ENCODE measurements at regions of chr7 and their contacts with region 1.

Region 1: GRCh38 chr7:131107337-131108211 is 220.1 kb upstream of the MKLN1 start:
- DNase-seq: peak; percentile 76 to 85 (median 80)
- ATAC-seq: peak; percentile 36 to 56 (median 48)
- H3K4me3 ChIP-seq: peak overlapping the region; percentile 62 to 98 (median 86)
- H3K27ac ChIP-seq: peak overlapping the region; percentile 94 to 100 (median 99)
- H3K4me1 ChIP-seq: peaks cover 5 to 67% (median 50%) of the 10 kb centered on the region in 12 donors
- H3K27me3 ChIP-seq: no peaks in the 10 kb centered on the region
- CTCF ChIP-seq: peak in 2 of 12 donors; percentile 14 to 26
- POLR2A ChIP-seq: peak in 1 of 2 donors; percentile 87

Region 2: DNA sequence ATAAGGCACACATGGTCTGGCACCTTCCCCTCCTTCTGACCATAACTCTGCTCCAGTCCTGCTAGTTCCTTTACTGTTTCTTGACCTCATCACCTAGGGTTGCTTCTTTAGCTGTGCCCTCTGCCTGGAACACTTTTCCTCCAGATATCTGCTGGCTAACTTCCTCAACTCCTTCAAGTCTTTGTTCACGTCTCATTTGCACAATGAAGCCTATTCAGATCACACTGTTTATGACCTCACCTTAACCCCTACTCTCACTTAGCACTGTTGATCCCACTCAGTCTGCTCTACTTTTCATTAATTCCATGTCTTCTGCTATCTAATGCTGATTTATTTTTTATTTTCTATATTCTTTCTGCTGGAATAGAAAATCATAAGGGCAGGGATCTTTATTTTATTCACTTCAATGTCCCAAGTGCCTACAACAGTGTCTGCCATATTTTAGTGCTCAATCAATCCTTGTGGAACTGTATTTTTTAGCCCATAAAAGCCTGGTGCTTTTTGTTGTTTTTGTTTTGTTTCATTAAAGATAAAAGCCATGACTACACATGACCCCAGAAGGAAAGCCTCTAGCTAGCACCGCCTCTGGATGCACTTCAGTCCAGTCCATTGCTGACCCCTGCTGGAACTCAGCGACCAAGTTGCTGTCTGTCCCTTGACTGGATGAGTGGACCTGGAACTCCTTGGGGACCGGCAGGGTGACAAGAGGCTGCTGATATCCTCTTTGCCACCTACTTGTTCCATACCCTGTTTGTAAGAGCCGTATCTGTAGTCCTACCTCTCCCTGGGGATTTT is 385.9 kb before region 1 on chr7:
- intact Hi-C with region 1: no loop called
- DNase-seq: peak; percentile 69 to 84 (median 79)
- ATAC-seq: peak; percentile 87 to 98 (median 95)
- H3K4me3 ChIP-seq: no peak overlapping the region
- H3K27ac ChIP-seq: no peak overlapping the region
- H3K4me1 ChIP-seq: peaks cover 0 to 7% (median 0%) of the 10 kb centered on the region in 12 donors
- H3K27me3 ChIP-seq: peaks cover 0 to 15% (median 0%) of the 10 kb centered on the region in 9 donors
- CTCF ChIP-seq: peak; percentile 48 to 85 (median 76)
- POLR2A ChIP-seq: no peak

Region 3: GRCh38 chr7:130896898-130897514 is 210.6 kb before region 1 on chr7:
- intact Hi-C with region 1: loop called in 1 of 10 experiments (anchors 10 kb)
- DNase-seq: peak; percentile 72 to 85 (median 79)
- ATAC-seq: peak; percentile 41 to 66 (median 58)
- H3K4me3 ChIP-seq: no peak overlapping the region
- H3K27ac ChIP-seq: peak overlapping the region in 8 of 12 donors; percentile 30 to 81 (median 43)
- H3K4me1 ChIP-seq: peaks cover 7 to 88% (median 54%) of the 10 kb centered on the region in 12 donors
- H3K27me3 ChIP-seq: no peaks in the 10 kb centered on the region
- CTCF ChIP-seq: peak; percentile 70 to 90 (median 85)
- POLR2A ChIP-seq: no peak

Region 4: GRCh38 chr7:131151034-131151433 is 43.5 kb after region 1 on chr7:
- intact Hi-C with region 1: loop called in 1 of 10 experiments (anchors 5 kb)
- DNase-seq: no peak
- ATAC-seq: no peak
- H3K4me3 ChIP-seq: no peak overlapping the region
- H3K27ac ChIP-seq: no peak overlapping the region
- H3K4me1 ChIP-seq: peaks cover 0 to 13% (median 0%) of the 10 kb centered on the region in 12 donors
- H3K27me3 ChIP-seq: no peaks in the 10 kb centered on the region
- CTCF ChIP-seq: no peak
- POLR2A ChIP-seq: no peak

Region 5: GRCh38 chr7:131219312-131220041 is 111.9 kb after region 1 on chr7:
- intact Hi-C with region 1: loop called in 4 of 10 experiments (anchors 5 to 10 kb)
- DNase-seq: peak; percentile 59 to 78 (median 65)
- ATAC-seq: peak; percentile 78 to 97 (median 93)
- H3K4me3 ChIP-seq: no peak overlapping the region
- H3K27ac ChIP-seq: peak overlapping the region; percentile 25 to 82 (median 65)
- H3K4me1 ChIP-seq: peaks cover 0 to 20% (median 17%) of the 10 kb centered on the region in 12 donors
- H3K27me3 ChIP-seq: no peaks in the 10 kb centered on the region
- CTCF ChIP-seq: no peak
- POLR2A ChIP-seq: no peak

Region 6: DNA sequence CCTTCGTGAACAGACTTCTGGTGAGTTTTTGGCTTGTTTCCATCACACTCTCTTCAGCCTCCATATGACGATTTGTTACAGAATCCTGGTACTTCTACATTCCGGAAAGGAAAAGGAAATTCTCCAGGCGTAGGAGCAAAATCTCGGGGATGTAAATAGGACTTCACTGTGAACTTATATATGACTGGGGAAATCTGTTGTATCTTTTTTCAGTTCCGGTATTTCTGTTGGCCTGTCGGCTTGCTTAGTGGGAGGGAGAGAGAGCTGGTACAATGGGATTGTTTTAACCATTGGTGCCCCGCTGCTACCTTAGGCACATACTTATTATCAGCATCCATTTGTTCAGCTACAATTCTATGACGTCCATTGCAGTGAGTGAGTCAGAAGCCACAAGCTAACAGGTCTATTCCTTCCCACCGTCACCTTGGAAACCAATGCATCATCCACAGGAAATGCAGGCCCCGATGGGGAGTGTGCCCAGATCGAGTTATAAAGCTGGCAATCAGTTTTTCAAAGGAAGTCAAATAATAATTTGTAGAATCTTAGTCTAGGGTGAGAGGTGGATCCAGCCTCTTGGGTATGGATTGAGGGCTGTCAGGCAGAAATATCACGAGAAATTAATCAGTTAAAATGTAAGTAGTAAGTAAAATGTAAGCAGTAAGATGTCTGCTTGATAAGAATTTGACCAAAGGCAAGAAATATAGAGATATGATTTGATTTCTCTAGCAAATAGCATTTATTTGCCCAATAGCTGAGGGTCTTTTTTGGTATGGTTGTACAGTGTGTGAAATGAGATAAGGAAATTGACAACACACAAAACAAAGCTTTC is 128.1 kb after region 1 on chr7:
- intact Hi-C with region 1: loop called in 1 of 10 experiments (anchors 5 kb)
- DNase-seq: peak in 2 of 5 donors; percentile 43 to 60
- ATAC-seq: peak; percentile 25 to 76 (median 69)
- H3K4me3 ChIP-seq: no peak overlapping the region
- H3K27ac ChIP-seq: peak overlapping the region in 6 of 12 donors; percentile 15 to 65 (median 34)
- H3K4me1 ChIP-seq: peaks cover 0 to 47% (median 17%) of the 10 kb centered on the region in 12 donors
- H3K27me3 ChIP-seq: no peaks in the 10 kb centered on the region
- CTCF ChIP-seq: no peak
- POLR2A ChIP-seq: no peak

Region 7: GRCh38 chr7:131302876-131303707 is 195.5 kb after region 1 on chr7:
- intact Hi-C with region 1: loop called in 7 of 10 experiments (anchors 2 to 10 kb)
- DNase-seq: no peak
- ATAC-seq: peak in 3 of 4 donors; percentile 39 to 58 (median 46)
- H3K4me3 ChIP-seq: no peak overlapping the region
- H3K27ac ChIP-seq: peak overlapping the region in 8 of 12 donors; percentile 4 to 72 (median 55)
- H3K4me1 ChIP-seq: peaks cover 0 to 41% (median 22%) of the 10 kb centered on the region in 12 donors
- H3K27me3 ChIP-seq: no peaks in the 10 kb centered on the region
- CTCF ChIP-seq: peak; percentile 34 to 70 (median 56)
- POLR2A ChIP-seq: no peak

Region 8: DNA sequence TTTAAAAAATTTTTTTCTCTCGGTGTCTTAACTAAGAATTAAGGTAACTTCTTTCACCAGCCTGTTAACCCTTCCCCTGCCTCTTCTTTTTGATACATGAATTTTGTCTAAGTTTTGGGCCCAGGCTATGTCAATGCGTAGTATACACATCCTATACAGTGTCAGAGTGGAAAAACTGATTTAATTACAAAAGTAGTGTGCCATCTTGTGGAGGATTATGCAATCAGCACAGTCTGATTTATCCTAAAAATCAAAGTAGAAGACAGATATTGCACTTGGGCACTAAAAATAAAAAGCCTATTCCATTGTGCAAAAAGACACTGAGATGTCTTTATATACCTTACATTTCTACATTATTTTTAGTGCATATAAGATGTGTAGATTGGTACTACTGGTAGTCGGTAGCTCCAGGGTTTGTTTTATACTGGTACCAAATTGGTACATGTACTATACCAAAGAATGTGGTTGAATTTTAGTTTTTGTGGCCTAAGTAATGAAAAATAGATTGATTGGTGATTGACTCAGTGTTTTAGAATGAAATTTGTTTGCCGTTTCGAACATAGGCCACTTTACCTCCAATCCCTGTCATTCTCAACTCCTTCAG is 316.7 kb after region 1 on chr7:
- intact Hi-C with region 1: loop called in 5 of 10 experiments (anchors 2 to 10 kb)
- DNase-seq: no peak
- ATAC-seq: peak; percentile 41 to 64 (median 58)
- H3K4me3 ChIP-seq: no peak overlapping the region
- H3K27ac ChIP-seq: peak overlapping the region in 1 of 12 donors; percentile 15
- H3K4me1 ChIP-seq: peaks cover 0 to 27% (median 15%) of the 10 kb centered on the region in 12 donors
- H3K27me3 ChIP-seq: no peaks in the 10 kb centered on the region
- CTCF ChIP-seq: peak; percentile 32 to 73 (median 63)
- POLR2A ChIP-seq: no peak